ENCODE measurements at regions of chr10 and their contacts with region 1.

Region 1: DNA sequence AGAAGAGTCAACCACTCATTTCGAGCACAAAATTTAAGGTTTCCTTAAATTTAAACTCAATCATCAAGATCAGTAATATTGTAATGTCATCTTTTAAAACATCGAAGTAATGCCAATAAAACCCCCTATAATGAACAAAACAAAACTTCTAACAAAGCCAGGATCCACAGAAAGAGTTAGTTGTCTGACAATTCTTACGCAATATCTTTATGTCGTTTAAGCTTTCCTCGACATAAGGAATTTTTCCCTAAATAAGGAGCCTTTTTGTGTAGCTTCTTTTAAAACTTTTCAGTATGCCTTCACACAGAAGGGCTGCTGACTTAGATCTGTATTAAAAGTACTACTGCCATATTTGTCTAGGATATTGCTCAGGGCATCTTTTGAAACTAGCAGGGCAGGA is 7.5 kb downstream of the EBLN1 start:
- DNase-seq: no peak
- ATAC-seq: no peak
- H3K4me3 ChIP-seq: no peak overlapping the region
- H3K27ac ChIP-seq: no peak overlapping the region
- H3K4me1 ChIP-seq: no peaks in the 10 kb centered on the region
- H3K27me3 ChIP-seq: no peaks in the 10 kb centered on the region

Region 2: GRCh38 chr10:22042557-22043326 is 167.5 kb before region 1 on chr10:
- intact Hi-C with region 1: loop called in 1 of 2 experiments (anchors 10 kb)
- DNase-seq: no peak
- ATAC-seq: no peak
- H3K4me3 ChIP-seq: no peak overlapping the region
- H3K27ac ChIP-seq: no peak overlapping the region
- H3K4me1 ChIP-seq: no peaks in the 10 kb centered on the region
- H3K27me3 ChIP-seq: no peaks in the 10 kb centered on the region

Measured in aorta (tissue), 5 donors.